CD14-positive monocyte (primary cell): ENCODE measurements at regions of chr11 and their contacts with region 1.

Region 1: GRCh38 chr11:95279921-95280868 is 49.2 kb upstream of the SESN3 start:
- DNase-seq: peak in 2 of 3 donors; percentile 57 to 62
- H3K4me3 ChIP-seq: peak overlapping the region in 1 of 3 experiments; percentile 54
- H3K4me3 Mint-ChIP-seq: peak overlapping the region in 1 of 2 donors; percentile 62
- H3K27ac ChIP-seq: peak overlapping the region; percentile 75 to 85
- H3K27ac Mint-ChIP-seq: peak overlapping the region; percentile 35 to 92 (median 85)
- H3K4me1 ChIP-seq: peaks cover 48% of the 10 kb centered on the region in 2 donors
- H3K4me1 Mint-ChIP-seq: peaks cover 57% of the 10 kb centered on the region
- H3K27me3 ChIP-seq: no peaks in the 10 kb centered on the region
- H3K27me3 Mint-ChIP-seq: peaks cover 0 to 1% (median 0%) of the 10 kb centered on the region in 3 donors
- CTCF ChIP-seq: no peak

Region 2: DNA sequence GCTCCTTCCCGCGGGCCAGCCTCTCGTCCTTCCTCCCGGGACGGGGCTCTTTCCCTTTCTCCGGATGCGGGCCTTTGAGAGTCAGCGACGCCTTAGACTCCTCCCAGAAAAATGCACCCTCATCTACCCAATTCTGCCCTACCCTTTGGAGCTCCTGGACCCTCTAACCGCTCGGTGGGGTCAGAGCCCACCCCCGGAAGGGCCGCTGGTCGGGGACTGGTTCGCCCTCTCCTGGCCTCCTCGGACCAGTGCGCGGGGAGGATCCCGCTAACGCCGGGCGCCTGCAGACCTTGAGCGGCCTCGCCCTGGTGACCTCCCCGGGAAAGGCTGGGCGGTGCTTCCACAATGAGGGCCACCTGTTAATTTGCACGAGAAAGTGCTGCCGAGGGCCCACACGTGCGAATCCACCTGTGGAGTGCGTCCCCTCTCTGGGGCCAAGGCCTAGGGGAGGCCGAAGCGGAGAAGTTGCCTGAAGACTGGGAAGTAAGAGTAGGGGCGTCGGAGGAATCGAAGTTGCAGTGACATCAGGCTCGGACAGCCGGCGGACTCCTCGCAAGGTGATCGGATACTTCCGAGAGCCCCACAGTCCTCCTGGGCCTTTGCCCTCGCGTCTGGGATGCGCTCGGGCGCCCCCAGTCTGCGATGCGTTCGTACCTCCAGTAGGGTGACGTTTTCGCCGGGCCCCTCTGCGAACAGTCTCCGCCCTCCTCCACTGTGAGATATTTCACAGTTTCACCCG is 129.1 kb before region 1 on chr11:
- intact Hi-C with region 1: no loop called
- DNase-seq: peak; percentile 78 to 84 (median 78)
- H3K4me3 ChIP-seq: peak overlapping the region; percentile 67 to 89 (median 75)
- H3K4me3 Mint-ChIP-seq: peak overlapping the region; percentile 96 to 97
- H3K27ac ChIP-seq: peak overlapping the region; percentile 34 to 77
- H3K27ac Mint-ChIP-seq: peak overlapping the region; percentile 76 to 93 (median 83)
- H3K4me1 ChIP-seq: peaks cover 22 to 33% of the 10 kb centered on the region in 2 donors
- H3K4me1 Mint-ChIP-seq: peaks cover 35% of the 10 kb centered on the region
- H3K27me3 ChIP-seq: peaks cover 0 to 6% of the 10 kb centered on the region in 2 donors
- H3K27me3 Mint-ChIP-seq: peaks cover 2 to 16% (median 4%) of the 10 kb centered on the region in 3 donors
- CTCF ChIP-seq: peak; percentile 90

Region 3: GRCh38 chr11:95218149-95218548 is 62.0 kb before region 1 on chr11:
- intact Hi-C with region 1: no loop called
- DNase-seq: no peak
- H3K4me3 ChIP-seq: no peak overlapping the region
- H3K4me3 Mint-ChIP-seq: no peak overlapping the region
- H3K27ac ChIP-seq: no peak overlapping the region
- H3K27ac Mint-ChIP-seq: no peak overlapping the region
- H3K4me1 ChIP-seq: no peaks in the 10 kb centered on the region
- H3K4me1 Mint-ChIP-seq: peaks cover 9% of the 10 kb centered on the region
- H3K27me3 ChIP-seq: no peaks in the 10 kb centered on the region
- H3K27me3 Mint-ChIP-seq: no peaks in the 10 kb centered on the region
- CTCF ChIP-seq: no peak

Region 4: GRCh38 chr11:95231127-95231880 is 48.9 kb before region 1 on chr11 and contains the start of gene SESN3:
- intact Hi-C with region 1: loop called (anchors 5 to 10 kb)
- DNase-seq: peak; percentile 98
- H3K4me3 ChIP-seq: peak within 1 kb of the TSS; percentile 73 to 91 (median 90)
- H3K4me3 Mint-ChIP-seq: peak within 1 kb of the TSS in 1 of 2 donors; percentile 98
- H3K27ac ChIP-seq: peak within 1 kb of the TSS; percentile 83 to 92
- H3K27ac Mint-ChIP-seq: peak within 1 kb of the TSS; percentile 77 to 93 (median 87)
- H3K4me1 ChIP-seq: peaks cover 32 to 55% of the 10 kb centered on the region in 2 donors
- H3K4me1 Mint-ChIP-seq: peaks cover 29% of the 10 kb centered on the region
- H3K27me3 ChIP-seq: no peaks in the 10 kb centered on the region
- H3K27me3 Mint-ChIP-seq: no peaks in the 10 kb centered on the region
- CTCF ChIP-seq: no peak
- polyA plus RNA-seq, gene SESN3: 1.1 to 7.4 (median 1.4) TPM